ENCODE measurements at regions of chr1 and their contacts with region 1.

Region 1: DNA sequence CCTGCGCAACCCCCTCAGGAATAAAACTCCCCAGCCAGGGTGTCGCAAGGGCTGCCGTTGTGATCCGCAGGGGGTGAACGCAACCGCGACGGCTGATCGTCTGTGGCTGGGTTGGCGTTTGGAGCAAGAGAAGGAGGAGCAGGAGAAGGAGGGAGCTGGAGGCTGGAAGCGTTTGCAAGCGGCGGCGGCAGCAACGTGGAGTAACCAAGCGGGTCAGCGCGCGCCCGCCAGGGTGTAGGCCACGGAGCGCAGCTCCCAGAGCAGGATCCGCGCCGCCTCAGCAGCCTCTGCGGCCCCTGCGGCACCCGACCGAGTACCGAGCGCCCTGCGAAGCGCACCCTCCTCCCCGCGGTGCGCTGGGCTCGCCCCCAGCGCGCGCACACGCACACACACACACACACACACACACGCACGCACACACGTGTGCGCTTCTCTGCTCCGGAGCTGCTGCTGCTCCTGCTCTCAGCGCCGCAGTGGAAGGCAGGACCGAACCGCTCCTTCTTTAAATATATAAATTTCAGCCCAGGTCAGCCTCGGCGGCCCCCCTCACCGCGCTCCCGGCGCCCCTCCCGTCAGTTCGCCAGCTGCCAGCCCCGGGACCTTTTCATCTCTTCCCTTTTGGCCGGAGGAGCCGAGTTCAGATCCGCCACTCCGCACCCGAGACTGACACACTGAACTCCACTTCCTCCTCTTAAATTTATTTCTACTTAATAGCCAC is 696 bp downstream of the TGFB2 start:
- DNase-seq: peak; percentile 67 to 82 (median 73)
- H3K4me3 ChIP-seq: peak overlapping the region; percentile 62
- H3K27ac ChIP-seq: peak overlapping the region; percentile 43 to 63
- H3K4me1 ChIP-seq: no peaks in the 10 kb centered on the region
- H3K27me3 ChIP-seq: no peaks in the 10 kb centered on the region
- CTCF ChIP-seq: peak in 1 of 3 donors; percentile 13
- EP300 ChIP-seq: no peak
- POLR2A ChIP-seq: peak; percentile 38

Region 2: DNA sequence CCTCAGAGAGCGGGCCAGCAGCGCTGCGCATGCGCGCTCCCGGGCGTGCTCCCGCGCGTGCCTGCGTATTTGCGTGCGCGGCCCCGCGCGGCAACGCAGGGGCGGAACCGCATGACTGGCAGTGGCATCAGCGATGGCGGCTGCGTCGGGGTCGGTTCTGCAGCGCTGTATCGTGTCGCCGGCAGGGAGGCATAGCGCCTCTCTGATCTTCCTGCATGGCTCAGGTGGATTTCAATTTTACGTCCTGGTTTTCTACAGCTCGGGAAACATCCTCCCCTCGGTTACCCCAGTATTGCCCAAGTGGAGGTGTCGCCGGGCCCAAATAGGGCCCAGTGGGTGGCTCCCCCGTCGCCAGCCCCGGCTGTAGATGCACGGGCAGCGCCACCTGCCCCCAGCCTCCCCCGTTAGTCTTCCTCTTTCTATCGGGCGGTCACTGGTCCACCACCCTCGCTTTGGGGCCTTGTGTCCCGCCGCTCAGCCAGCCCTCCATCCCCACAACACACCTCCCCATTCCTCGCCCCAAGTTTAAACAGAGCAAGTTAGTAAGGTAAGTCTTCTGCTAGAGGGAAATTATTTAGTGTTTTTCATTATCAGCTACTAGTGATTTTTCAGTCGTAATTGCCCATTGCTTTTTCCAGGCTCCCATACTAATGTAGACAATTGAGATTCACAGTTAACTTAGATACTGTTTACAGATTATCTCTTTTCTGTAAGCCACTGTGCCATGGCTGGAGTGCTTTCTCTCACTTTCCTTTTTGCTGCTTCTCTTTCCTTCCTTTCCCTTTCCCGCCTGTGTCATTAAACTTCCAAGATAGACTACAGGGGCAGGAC is 828.1 kb after region 1 on chr1 and contains the start of gene LYPLAL1:
- intact Hi-C with region 1: loop called in 1 of 4 experiments (anchors 10 kb)
- DNase-seq: peak; percentile 86 to 94 (median 91)
- H3K4me3 ChIP-seq: peak within 1 kb of the TSS; percentile 87
- H3K27ac ChIP-seq: peak within 1 kb of the TSS; percentile 73 to 82
- H3K4me1 ChIP-seq: peaks cover 7% of the 10 kb centered on the region
- H3K27me3 ChIP-seq: no peaks in the 10 kb centered on the region
- CTCF ChIP-seq: no peak
- EP300 ChIP-seq: no peak
- POLR2A ChIP-seq: peak; percentile 83
- total RNA-seq, gene LYPLAL1: 25.3 to 43.8 (median 36.8) TPM

Measured in ovary (tissue), 10 donors.